ENCODE measurements at regions of chr7 and their contacts with region 1.

Region 1: GRCh38 chr7:48755061-48755555 is 169.2 kb upstream of the CDC14C start:
- DNase-seq: peak; percentile 26
- H3K4me3 ChIP-seq: no peak overlapping the region
- CTCF ChIP-seq: no peak

Region 2: GRCh38 chr7:48237354-48237753 is 517.8 kb before region 1 on chr7:
- in situ Hi-C with region 1: no loop called
- DNase-seq: no peak
- H3K4me3 ChIP-seq: no peak overlapping the region
- CTCF ChIP-seq: no peak

Region 3: GRCh38 chr7:48681006-48681405 is 74.1 kb before region 1 on chr7:
- in situ Hi-C with region 1: loop called (anchors 5 kb)
- DNase-seq: no peak
- H3K4me3 ChIP-seq: no peak overlapping the region
- CTCF ChIP-seq: no peak

Region 4: GRCh38 chr7:48691788-48692187 is 63.3 kb before region 1 on chr7:
- in situ Hi-C with region 1: no loop called
- DNase-seq: no peak
- H3K4me3 ChIP-seq: no peak overlapping the region
- CTCF ChIP-seq: no peak

Measured in astrocyte of the cerebellum (primary cell).